ENCODE measurements at regions of chr3 and their contacts with region 1.

Region 1: GRCh38 chr3:16177962-16178627 is 3.6 kb downstream of the GALNT15 start:
- DNase-seq: peak; percentile 74
- H3K4me3 ChIP-seq: no peak overlapping the region
- H3K27ac ChIP-seq: no peak overlapping the region
- H3K4me1 ChIP-seq: peaks cover 11% of the 10 kb centered on the region
- H3K27me3 ChIP-seq: peaks cover 0 to 2% of the 10 kb centered on the region in 2 experiments
- CTCF ChIP-seq: peak; percentile 98 to 100
- POLR2A ChIP-seq: peak; percentile 14

Region 2: GRCh38 chr3:15693355-15693754 is 484.7 kb before region 1 on chr3:
- CTCF ChIA-PET with region 1: no interaction called
- POLR2A ChIA-PET with region 1: no interaction called
- dilution Hi-C with region 1: no loop called
- intact Hi-C with region 1: no loop called
- DNase-seq: no peak
- H3K4me3 ChIP-seq: no peak overlapping the region
- H3K27ac ChIP-seq: no peak overlapping the region
- H3K4me1 ChIP-seq: no peaks in the 10 kb centered on the region
- H3K27me3 ChIP-seq: no peaks in the 10 kb centered on the region
- CTCF ChIP-seq: no peak
- POLR2A ChIP-seq: no peak

Region 3: DNA sequence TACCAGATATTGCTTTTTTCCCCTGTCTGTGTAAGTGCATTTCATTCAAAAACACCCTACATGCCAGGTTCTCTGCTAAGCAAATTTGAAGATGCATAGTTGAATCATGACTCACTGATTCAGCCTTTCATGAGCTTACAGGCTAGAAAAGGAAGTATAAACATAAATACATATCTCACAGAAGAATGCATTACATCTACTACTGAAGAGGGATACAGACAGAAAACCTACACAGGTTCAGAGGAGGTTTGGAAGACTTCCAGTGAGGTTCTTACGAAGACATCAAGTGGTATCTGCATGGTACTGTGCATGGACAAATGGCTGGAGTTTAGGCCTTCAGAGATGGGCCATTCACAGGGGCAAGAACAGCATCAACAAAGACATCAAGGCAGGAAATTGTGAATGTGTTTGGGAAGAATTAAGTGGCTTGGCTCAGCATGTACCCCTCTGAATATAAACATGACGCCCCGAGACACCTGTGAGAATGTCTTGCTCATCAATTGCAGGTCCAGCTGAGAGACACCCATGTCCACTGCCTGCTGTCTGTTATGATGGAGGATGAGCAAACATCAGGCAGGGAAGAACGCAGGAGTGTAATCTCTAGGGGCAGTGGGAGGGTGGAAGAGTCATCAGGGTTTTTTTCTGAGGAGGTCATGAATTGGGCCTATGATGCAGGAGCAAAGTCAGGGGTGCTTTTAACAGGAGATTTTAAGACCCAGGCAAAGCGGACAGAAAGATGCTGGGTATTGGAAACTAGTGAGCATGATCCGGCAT is 108.8 kb before region 1 on chr3:
- CTCF ChIA-PET with region 1: interaction called, 29 read pairs
- POLR2A ChIA-PET with region 1: no interaction called
- dilution Hi-C with region 1: no loop called
- intact Hi-C with region 1: no loop called
- DNase-seq: peak; percentile 72
- H3K4me3 ChIP-seq: no peak overlapping the region
- H3K27ac ChIP-seq: peak overlapping the region; percentile 80
- H3K4me1 ChIP-seq: peaks cover 66% of the 10 kb centered on the region
- H3K27me3 ChIP-seq: no peaks in the 10 kb centered on the region
- CTCF ChIP-seq: no peak
- POLR2A ChIP-seq: no peak

Region 4: DNA sequence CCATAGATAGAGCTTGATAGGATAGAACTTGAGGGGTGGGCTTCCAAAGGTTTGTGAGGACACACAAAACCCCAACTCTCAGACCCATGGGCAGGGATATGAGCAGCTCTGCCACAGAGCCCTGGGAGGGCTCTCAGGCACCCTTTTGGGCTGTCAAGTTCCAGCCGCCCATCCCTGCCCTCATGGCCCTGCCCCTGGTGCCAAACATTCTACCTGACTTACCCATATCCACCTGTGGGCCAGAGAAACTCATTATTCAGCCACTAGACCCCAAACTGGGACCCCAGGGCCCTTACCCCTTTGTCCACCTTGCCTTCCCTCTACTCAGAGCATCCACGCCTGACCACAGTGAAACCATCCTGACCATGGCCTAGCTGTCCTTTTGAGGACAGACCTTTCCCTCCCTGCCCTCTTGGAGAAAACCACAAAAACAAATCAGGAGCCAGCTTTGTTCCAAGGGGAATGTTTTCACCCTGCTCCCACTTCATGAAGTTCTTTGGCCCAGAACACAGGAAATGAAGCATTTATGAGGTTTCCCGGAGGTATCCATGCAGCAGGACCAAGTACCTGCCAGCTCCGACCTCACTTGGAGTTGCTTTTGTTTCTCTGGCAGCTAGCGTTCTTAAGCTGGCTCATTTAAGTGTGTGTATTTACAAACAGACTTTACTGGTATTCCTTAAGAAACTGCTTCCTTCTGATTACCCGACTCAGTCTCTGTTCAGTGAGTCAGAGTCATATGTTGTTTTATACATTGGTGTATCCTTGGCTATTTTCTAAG is 37.8 kb before region 1 on chr3:
- CTCF ChIA-PET with region 1: interaction called, 13 read pairs
- POLR2A ChIA-PET with region 1: interaction called, 3 read pairs
- dilution Hi-C with region 1: no loop called
- intact Hi-C with region 1: loop called (anchors 1 kb)
- DNase-seq: peak; percentile 91
- H3K4me3 ChIP-seq: no peak overlapping the region
- H3K27ac ChIP-seq: peak overlapping the region; percentile 83
- H3K4me1 ChIP-seq: peaks cover 16% of the 10 kb centered on the region
- H3K27me3 ChIP-seq: no peaks in the 10 kb centered on the region
- CTCF ChIP-seq: no peak
- POLR2A ChIP-seq: peak; percentile 19

Region 5: DNA sequence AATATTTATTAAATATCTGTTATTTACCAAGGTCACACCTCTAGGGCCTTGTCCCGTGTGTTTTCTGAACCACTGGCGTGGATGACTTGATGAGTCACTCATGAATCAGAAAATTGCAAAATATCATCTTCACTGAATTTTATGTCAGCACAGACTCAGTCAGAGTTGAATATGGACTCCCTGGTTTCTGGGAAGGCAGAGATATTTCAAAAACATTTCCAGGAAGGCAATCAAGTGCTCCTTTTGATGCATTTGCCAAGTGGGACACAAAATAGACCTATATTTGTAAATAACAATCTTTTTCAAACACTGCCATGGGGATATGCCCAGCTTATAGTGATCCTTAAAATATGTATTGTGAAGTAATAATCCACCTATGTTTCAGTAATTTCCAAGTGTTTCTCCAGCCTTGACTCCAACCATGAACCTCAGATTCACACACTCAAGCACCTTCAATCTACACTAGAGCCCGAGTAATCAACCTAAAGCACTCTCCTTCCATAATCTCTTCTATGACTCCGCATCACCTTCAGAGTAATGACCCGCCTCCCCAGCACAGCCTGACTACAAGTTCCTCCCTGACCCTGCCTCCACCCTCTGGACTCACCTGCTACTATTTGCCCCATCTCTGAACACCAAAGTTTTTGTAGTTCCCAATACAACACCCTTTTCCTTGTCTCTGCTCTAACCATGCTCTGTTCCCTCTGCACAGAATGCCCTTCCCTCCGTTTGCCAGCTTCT is 62.4 kb after region 1 on chr3:
- CTCF ChIA-PET with region 1: interaction called, 16 read pairs
- POLR2A ChIA-PET with region 1: no interaction called
- dilution Hi-C with region 1: no loop called
- intact Hi-C with region 1: no loop called
- DNase-seq: no peak
- H3K4me3 ChIP-seq: no peak overlapping the region
- H3K27ac ChIP-seq: no peak overlapping the region
- H3K4me1 ChIP-seq: peaks cover 11% of the 10 kb centered on the region
- H3K27me3 ChIP-seq: no peaks in the 10 kb centered on the region
- CTCF ChIP-seq: no peak
- POLR2A ChIP-seq: no peak

Measured in endothelial cell of umbilical vein (primary cell).